Activated naive CD4-positive, alpha-beta T cell treated with anti-CD3 and anti-CD28 coated beads for 36 hours (primary cell): ENCODE measurements at regions of chr9 and their contacts with region 1.

Region 1: DNA sequence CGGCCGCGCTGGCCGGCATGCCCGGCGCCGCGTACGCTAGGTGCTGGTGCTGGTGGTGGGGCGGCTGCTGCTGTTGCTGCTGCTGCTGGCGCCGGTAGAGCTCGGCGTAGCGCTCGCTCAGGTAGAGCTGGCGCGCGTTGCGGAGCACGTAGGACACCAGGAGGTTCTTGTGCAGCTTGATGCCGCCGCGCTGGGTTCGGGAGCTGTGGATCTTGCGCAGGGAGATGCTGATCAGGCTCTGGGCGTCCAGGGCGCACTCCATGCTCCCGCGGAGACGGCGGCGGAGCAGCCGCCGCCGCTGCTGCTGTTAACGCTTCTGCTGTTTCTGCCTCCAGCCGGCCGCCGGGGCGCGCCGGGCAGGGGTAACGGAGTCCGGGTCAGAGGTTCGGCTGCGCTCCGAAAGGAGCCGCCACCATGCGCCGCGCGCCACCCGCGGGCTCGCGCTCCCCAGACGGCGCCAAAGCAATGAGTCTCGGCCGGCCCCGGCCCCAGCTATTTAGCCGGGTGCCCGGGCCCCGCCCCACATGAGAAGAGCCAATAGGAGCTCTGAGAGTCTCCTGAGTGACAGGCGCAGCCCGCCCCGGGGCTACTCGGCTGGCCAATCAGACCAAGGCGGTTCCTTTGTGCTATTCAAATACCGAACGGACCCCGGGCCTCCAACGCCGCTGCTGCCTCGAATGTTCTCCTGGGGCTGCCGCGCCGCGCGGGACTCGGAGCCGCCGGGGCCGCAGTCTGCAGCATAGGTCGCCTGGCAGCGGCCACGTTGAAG is at the start of gene IER5L:
- DNase-seq: peak; percentile 93
- H3K4me3 Mint-ChIP-seq: peak within 1 kb of the TSS; percentile 87
- H3K27ac Mint-ChIP-seq: no peak within 1 kb of the TSS
- H3K4me1 Mint-ChIP-seq: peaks cover 8% of the 10 kb centered on the region
- H3K27me3 Mint-ChIP-seq: no peaks in the 10 kb centered on the region
- total RNA-seq, gene IER5L: 1.1 to 1.6 TPM

Region 2: GRCh38 chr9:128987805-128988204 is 190.2 kb before region 1 on chr9:
- CTCF ChIA-PET with region 1: no interaction called
- intact Hi-C with region 1: no loop called
- DNase-seq: no peak
- H3K4me3 Mint-ChIP-seq: no peak overlapping the region
- H3K27ac Mint-ChIP-seq: no peak overlapping the region
- H3K4me1 Mint-ChIP-seq: no peaks in the 10 kb centered on the region
- H3K27me3 Mint-ChIP-seq: no peaks in the 10 kb centered on the region

Region 3: GRCh38 chr9:129166623-129167557 is 11.1 kb before region 1 on chr9:
- CTCF ChIA-PET with region 1: interaction called, 29 read pairs
- intact Hi-C with region 1: no loop called
- DNase-seq: peak; percentile 58
- H3K4me3 Mint-ChIP-seq: peak overlapping the region; percentile 67
- H3K27ac Mint-ChIP-seq: peak overlapping the region; percentile 18
- H3K4me1 Mint-ChIP-seq: peaks cover 22% of the 10 kb centered on the region
- H3K27me3 Mint-ChIP-seq: no peaks in the 10 kb centered on the region

Region 4: GRCh38 chr9:129237195-129237611 is 59.2 kb after region 1 on chr9:
- CTCF ChIA-PET with region 1: interaction called, 12 read pairs
- intact Hi-C with region 1: loop called (anchors 2 kb)
- DNase-seq: peak; percentile 83
- H3K4me3 Mint-ChIP-seq: peak overlapping the region; percentile 82
- H3K27ac Mint-ChIP-seq: peak overlapping the region; percentile 95
- H3K4me1 Mint-ChIP-seq: peaks cover 53% of the 10 kb centered on the region
- H3K27me3 Mint-ChIP-seq: no peaks in the 10 kb centered on the region

Region 5: GRCh38 chr9:129320575-129321263 is 142.7 kb after region 1 on chr9:
- CTCF ChIA-PET with region 1: interaction called, 12 read pairs
- intact Hi-C with region 1: loop called (anchors 1 kb)
- DNase-seq: peak; percentile 77
- H3K4me3 Mint-ChIP-seq: peak overlapping the region; percentile 68
- H3K27ac Mint-ChIP-seq: peak overlapping the region; percentile 67
- H3K4me1 Mint-ChIP-seq: peaks cover 18% of the 10 kb centered on the region
- H3K27me3 Mint-ChIP-seq: no peaks in the 10 kb centered on the region

Region 6: DNA sequence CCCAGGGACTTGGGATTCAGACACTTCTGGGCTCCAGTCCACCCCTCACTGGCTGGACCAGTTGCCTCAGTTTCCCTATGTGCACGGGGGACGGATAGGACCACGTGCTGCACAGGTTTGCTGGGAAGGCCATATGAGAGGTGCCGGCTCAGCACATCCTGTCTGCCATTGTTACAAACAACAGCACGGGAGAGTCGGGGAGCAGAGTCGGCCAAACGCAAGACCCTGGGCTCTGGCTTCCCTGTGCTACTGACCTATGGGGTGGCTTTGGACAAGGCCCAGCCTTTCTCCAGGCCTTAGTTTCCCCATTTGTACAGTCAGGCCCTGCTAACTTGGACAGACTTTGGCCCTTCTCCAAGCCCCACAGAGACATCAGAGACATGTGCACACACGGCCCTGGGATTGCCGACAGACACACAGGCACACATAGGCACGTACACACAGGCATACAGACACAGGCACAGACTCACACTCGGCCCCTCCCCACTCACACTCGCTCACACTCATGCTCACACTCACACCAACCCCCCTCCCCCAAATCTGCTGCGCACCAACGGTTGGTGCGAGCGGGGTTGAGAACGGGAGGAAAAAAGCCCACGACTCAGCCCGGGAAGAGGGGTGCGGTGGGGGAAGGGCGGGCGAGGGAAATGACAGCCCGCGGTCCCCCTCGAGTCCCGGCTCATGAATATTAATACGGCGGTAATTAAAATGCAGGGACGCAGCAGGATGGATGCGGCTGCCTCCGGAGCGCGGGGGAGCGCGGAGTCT is 309.9 kb after region 1 on chr9:
- CTCF ChIA-PET with region 1: interaction called, 3 read pairs
- intact Hi-C with region 1: loop called (anchors 1 kb)
- DNase-seq: peak; percentile 75
- H3K4me3 Mint-ChIP-seq: peak overlapping the region; percentile 93
- H3K27ac Mint-ChIP-seq: peak overlapping the region; percentile 100
- H3K4me1 Mint-ChIP-seq: peaks cover 62% of the 10 kb centered on the region
- H3K27me3 Mint-ChIP-seq: no peaks in the 10 kb centered on the region

Region 7: DNA sequence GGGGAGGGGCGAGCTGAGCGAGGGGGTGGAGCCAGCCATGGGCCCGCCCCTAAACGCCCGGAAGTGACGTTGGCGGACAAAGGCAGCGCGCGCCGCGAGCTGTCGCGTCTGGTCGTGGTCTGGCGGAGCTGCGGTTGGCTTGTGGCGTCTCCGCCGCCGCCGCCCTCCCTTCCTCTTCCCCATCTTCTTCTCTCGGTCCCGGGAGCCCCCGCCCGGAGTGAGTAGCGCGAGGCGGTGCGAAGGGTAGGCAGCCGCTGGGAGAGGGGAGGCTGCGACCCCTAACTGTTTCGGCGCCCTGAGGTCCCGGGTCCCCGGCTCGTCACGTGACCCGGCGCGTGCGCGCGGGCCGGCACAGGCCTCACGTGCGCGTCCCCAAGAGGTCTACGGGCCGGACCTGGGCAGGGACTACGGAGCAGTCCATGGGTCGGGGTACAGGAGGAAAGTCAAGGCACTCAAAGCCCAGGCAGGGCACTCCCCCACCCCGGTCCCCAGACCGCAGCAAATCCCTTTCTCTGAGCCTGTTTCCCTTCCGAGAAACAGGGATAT is 448.2 kb after region 1 on chr9 and contains the start of gene NTMT1:
- CTCF ChIA-PET with region 1: interaction called, 32 read pairs
- intact Hi-C with region 1: loop called (anchors 1 kb)
- DNase-seq: peak; percentile 92
- H3K4me3 Mint-ChIP-seq: peak within 1 kb of the TSS; percentile 77
- H3K27ac Mint-ChIP-seq: peak within 1 kb of the TSS; percentile 93
- H3K4me1 Mint-ChIP-seq: peaks cover 59% of the 10 kb centered on the region
- H3K27me3 Mint-ChIP-seq: peaks cover 14% of the 10 kb centered on the region
- total RNA-seq, gene NTMT1: 58.6 to 59.3 TPM